ENCODE measurements at regions of chr2 and their contacts with region 1.

Region 1: DNA sequence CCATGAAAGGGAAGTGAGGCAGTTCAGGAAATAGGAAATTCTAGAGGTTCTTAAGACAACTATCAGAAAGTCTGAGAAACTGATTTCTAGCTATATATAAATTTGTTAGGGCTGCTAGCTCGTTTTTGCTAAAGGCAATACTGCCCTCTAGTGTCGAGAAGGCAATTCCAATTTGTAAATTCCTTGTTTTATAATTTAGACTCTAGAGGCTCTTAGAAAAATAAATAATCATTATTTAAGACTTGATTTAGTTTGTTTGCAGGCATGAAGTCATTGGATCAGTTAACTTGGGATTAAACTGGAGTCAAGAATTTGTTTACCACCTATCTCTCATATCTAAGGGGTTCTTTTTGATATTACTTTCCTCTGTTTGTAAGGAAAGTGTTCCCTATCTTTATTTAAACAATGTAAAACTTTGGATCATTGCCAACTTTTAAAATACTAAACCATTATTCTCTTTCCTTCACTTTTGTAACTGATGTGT is 66.2 kb downstream of the ACVR2A start:
- DNase-seq: peak; percentile 91
- H3K4me3 ChIP-seq: no peak overlapping the region
- H3K27ac ChIP-seq: no peak overlapping the region
- H3K4me1 ChIP-seq: peaks cover 22% of the 10 kb centered on the region
- H3K27me3 ChIP-seq: no peaks in the 10 kb centered on the region
- CTCF ChIP-seq: peak; percentile 37 to 44
- POLR2A ChIP-seq: no peak

Region 2: GRCh38 chr2:146734042-146734820 is 1176.8 kb before region 1 on chr2:
- CTCF ChIA-PET with region 1: interaction called, 149 read pairs
- POLR2A ChIA-PET with region 1: no interaction called
- dilution Hi-C with region 1: no loop called
- intact Hi-C with region 1: loop called (anchors 1 kb)
- DNase-seq: peak; percentile 71
- H3K4me3 ChIP-seq: no peak overlapping the region
- H3K27ac ChIP-seq: no peak overlapping the region
- H3K4me1 ChIP-seq: no peaks in the 10 kb centered on the region
- H3K27me3 ChIP-seq: no peaks in the 10 kb centered on the region
- CTCF ChIP-seq: peak; percentile 31 to 43
- POLR2A ChIP-seq: no peak

Region 3: GRCh38 chr2:146874260-146874658 is 1036.8 kb before region 1 on chr2:
- CTCF ChIA-PET with region 1: interaction called, 6 read pairs
- POLR2A ChIA-PET with region 1: no interaction called
- dilution Hi-C with region 1: no loop called
- intact Hi-C with region 1: loop called (anchors 1 kb)
- DNase-seq: peak; percentile 98
- H3K4me3 ChIP-seq: peak overlapping the region in 1 of 3 experiments; percentile 29
- H3K27ac ChIP-seq: peak overlapping the region; percentile 90
- H3K4me1 ChIP-seq: peaks cover 34% of the 10 kb centered on the region
- H3K27me3 ChIP-seq: no peaks in the 10 kb centered on the region
- CTCF ChIP-seq: no peak
- POLR2A ChIP-seq: peak; percentile 16

Region 4: GRCh38 chr2:147045113-147045512 is 865.9 kb before region 1 on chr2:
- CTCF ChIA-PET with region 1: interaction called, 65 read pairs
- POLR2A ChIA-PET with region 1: no interaction called
- dilution Hi-C with region 1: no loop called
- intact Hi-C with region 1: loop called (anchors 1 kb)
- DNase-seq: peak; percentile 47
- H3K4me3 ChIP-seq: no peak overlapping the region
- H3K27ac ChIP-seq: no peak overlapping the region
- H3K4me1 ChIP-seq: no peaks in the 10 kb centered on the region
- H3K27me3 ChIP-seq: no peaks in the 10 kb centered on the region
- CTCF ChIP-seq: peak; percentile 62 to 69
- POLR2A ChIP-seq: no peak

Region 5: GRCh38 chr2:147364597-147364996 is 546.4 kb before region 1 on chr2:
- CTCF ChIA-PET with region 1: no interaction called
- POLR2A ChIA-PET with region 1: no interaction called
- dilution Hi-C with region 1: no loop called
- intact Hi-C with region 1: no loop called
- DNase-seq: no peak
- H3K4me3 ChIP-seq: no peak overlapping the region
- H3K27ac ChIP-seq: no peak overlapping the region
- H3K4me1 ChIP-seq: no peaks in the 10 kb centered on the region
- H3K27me3 ChIP-seq: no peaks in the 10 kb centered on the region
- CTCF ChIP-seq: no peak
- POLR2A ChIP-seq: no peak

Region 6: DNA sequence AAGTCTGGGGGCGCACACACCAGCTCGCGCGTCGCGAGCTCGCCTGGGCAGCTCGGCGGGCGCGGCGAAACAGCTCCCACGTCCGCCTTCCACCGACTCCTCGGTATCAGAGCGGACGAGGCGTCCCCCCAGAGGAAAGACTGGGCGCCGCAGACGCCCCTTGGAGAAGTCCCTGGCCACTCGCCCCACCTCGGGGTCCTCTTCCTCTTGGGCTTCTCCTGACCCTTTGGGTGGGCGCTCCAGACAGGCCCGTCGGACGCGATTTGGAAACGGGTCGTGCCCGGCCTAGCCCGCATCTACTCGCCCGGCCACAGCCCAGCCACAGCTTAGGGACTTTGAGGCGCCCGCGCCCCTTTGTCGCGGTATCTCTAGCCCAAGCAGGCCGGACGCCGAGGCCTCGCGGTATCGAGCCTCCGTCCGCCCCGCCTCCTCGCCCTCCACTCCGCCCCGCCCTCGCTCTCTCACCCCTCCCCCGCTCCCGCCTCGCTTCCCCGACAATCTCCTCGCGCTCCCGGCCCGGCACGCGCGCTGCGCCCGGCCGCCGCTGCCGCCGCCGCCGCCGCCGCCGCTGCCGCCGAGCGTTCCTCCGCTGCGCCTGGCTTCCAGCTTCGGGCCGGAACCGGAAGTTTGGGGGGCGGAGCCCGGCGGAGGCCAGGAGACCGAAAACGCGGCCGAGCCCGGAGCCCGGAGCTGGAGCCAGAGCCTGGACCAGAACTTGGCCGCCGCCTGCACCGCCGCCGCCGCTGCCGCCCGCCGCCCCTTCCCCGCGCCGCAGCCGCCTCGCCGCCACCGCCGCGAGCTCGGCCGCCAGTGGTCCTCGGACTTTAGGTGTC is 67.0 kb before region 1 on chr2:
- CTCF ChIA-PET with region 1: interaction called, 28 read pairs
- POLR2A ChIA-PET with region 1: no interaction called
- dilution Hi-C with region 1: no loop called
- intact Hi-C with region 1: loop called (anchors 1 kb)
- DNase-seq: peak; percentile 85
- H3K4me3 ChIP-seq: peak overlapping the region; percentile 60 to 95 (median 85)
- H3K27ac ChIP-seq: peak overlapping the region; percentile 70
- H3K4me1 ChIP-seq: peaks cover 20% of the 10 kb centered on the region
- H3K27me3 ChIP-seq: peaks cover 0 to 2% of the 10 kb centered on the region in 2 experiments
- CTCF ChIP-seq: peak in 1 of 2 donors; percentile 23
- POLR2A ChIP-seq: no peak

Region 7: GRCh38 chr2:148058641-148059040 is 147.6 kb after region 1 on chr2:
- CTCF ChIA-PET with region 1: no interaction called
- POLR2A ChIA-PET with region 1: no interaction called
- dilution Hi-C with region 1: no loop called
- intact Hi-C with region 1: no loop called
- DNase-seq: no peak
- H3K4me3 ChIP-seq: no peak overlapping the region
- H3K27ac ChIP-seq: no peak overlapping the region
- H3K4me1 ChIP-seq: no peaks in the 10 kb centered on the region
- H3K27me3 ChIP-seq: no peaks in the 10 kb centered on the region
- CTCF ChIP-seq: no peak
- POLR2A ChIP-seq: no peak